ENCODE measurements at regions of chr1 and their contacts with region 1.

Region 1: DNA sequence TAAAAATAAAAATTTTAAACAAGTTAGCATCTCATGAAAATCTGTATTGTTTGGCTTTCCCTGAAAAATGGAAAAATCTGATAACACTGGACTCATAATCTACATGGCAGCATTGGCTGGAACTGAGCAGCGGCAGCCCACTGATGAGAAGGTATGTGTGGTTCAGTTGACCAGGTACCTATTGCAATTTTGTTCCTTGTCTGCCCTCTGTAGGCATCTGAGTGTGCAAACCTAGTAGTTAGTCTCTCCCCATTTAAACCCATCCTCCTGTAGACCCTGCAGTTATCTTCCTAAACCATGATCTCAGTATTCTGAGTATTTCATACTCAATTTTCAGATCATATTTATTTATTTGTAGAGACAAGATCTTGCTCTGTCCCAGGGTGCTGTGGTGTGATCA is 59.4 kb upstream of the SERBP1 start:
- DNase-seq: peak; percentile 55
- CTCF ChIP-seq: peak; percentile 47

Region 2: GRCh38 chr1:67227196-67227595 is 262.4 kb before region 1 on chr1:
- in situ Hi-C with region 1: loop called (anchors 10 kb)
- DNase-seq: no peak
- CTCF ChIP-seq: no peak

Region 3: GRCh38 chr1:67372136-67372535 is 117.5 kb before region 1 on chr1:
- in situ Hi-C with region 1: no loop called
- DNase-seq: no peak
- CTCF ChIP-seq: no peak

Region 4: DNA sequence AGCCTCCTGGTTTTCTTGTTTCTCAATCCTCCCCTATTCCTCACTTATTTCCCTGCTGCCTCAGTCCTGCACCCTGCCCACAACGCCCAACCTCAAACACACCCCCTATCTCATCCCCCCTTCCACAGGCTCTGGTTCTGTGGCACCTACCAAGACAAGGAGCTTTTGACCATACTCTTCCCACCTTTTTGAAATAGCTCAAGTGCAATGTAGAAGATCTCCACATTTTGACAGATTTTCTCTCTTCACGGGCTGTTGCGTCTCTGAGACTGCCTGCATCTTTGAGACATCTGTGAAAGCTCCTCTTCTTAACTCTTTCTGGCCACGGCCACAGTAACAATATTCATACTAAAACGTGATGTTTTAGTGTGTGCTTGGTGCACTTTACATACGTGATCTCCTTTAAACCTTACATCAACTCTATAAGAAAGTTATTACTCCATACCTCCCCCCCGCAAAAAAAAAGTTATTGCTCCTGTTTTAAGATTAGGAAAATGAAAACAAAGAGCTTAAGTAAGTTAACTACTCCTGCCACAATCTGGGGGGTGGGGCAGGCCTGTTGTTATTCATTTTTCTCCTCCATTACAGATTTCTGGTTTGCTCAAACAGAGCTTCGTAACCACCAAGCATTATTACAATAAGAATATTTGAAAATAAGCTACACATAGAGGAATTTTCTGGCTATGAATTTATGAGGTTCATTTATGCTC is 57.6 kb before region 1 on chr1:
- in situ Hi-C with region 1: no loop called
- DNase-seq: no peak
- CTCF ChIP-seq: no peak

Measured in GM13977 (cell line).